ENCODE measurements at regions of chr12 and their contacts with region 1.

Region 1: DNA sequence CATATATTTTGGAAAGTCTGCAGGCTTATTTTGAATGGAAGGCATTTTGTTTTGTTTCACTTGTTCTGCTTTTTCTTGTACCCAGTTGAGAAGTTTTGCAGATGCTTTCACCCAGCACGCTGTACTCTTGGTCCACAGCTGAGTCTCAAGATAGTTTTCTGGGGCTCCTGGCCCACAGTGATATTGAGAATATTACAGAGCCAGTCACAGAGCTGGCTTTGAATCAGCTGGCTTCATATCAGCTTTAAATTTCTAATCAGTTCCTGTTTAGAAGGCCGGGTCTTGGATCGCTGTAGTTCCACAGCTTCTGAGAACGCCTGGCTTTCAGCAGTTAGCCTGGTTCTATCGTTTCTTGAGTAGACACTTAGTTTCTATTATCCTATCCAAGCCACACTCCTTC is 32.5 kb upstream of the PARP11 start:
- DNase-seq: peak in 1 of 14 experiments; percentile 20
- ATAC-seq: peak; percentile 26
- H3K4me3 ChIP-seq: peak overlapping the region; percentile 60
- H3K4me3 Mint-ChIP-seq: peak overlapping the region; percentile 94
- H3K27ac ChIP-seq: peak overlapping the region; percentile 41 to 61
- H3K27ac Mint-ChIP-seq: peak overlapping the region; percentile 89
- H3K4me1 ChIP-seq: peaks cover 16% of the 10 kb centered on the region
- H3K4me1 Mint-ChIP-seq: peaks cover 56% of the 10 kb centered on the region
- H3K27me3 ChIP-seq: no peaks in the 10 kb centered on the region
- H3K27me3 Mint-ChIP-seq: no peaks in the 10 kb centered on the region
- CTCF ChIP-seq: no peak

Region 2: DNA sequence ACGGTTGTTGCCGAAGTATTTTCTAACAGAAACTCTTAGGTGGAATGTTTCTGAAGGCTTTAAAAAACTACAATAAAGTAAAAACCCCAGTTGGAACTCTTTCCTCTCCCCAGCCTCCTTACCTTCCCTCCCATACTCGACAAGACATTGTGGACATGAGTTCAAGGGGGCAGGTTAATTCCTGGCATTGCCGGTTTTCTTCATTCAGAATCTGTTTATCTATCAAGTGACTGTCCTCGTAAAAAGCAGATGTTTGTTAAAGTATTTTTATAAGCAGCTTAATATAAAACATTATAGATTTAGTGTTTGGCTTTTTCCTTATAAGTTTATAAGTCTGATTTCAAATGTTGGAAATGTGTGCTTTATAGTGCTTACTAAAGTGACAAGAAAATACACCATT is 63.1 kb before region 1 on chr12:
- CTCF ChIA-PET with region 1: no interaction called
- POLR2A ChIA-PET with region 1: no interaction called
- intact Hi-C with region 1: no loop called
- DNase-seq: no peak
- ATAC-seq: no peak
- H3K4me3 ChIP-seq: no peak overlapping the region
- H3K4me3 Mint-ChIP-seq: no peak overlapping the region
- H3K27ac ChIP-seq: no peak overlapping the region
- H3K27ac Mint-ChIP-seq: peak overlapping the region; percentile 16
- H3K4me1 ChIP-seq: no peaks in the 10 kb centered on the region
- H3K4me1 Mint-ChIP-seq: peaks cover 61% of the 10 kb centered on the region
- H3K27me3 ChIP-seq: no peaks in the 10 kb centered on the region
- H3K27me3 Mint-ChIP-seq: no peaks in the 10 kb centered on the region
- CTCF ChIP-seq: no peak

Region 3: GRCh38 chr12:3928540-3929184 is 23.0 kb after region 1 on chr12:
- CTCF ChIA-PET with region 1: no interaction called
- POLR2A ChIA-PET with region 1: interaction called, 11 read pairs
- intact Hi-C with region 1: no loop called
- DNase-seq: no peak
- ATAC-seq: no peak
- H3K4me3 ChIP-seq: no peak overlapping the region
- H3K4me3 Mint-ChIP-seq: no peak overlapping the region
- H3K27ac ChIP-seq: no peak overlapping the region
- H3K27ac Mint-ChIP-seq: peak overlapping the region; percentile 17
- H3K4me1 ChIP-seq: peaks cover 53% of the 10 kb centered on the region
- H3K4me1 Mint-ChIP-seq: peaks cover 72% of the 10 kb centered on the region
- H3K27me3 ChIP-seq: no peaks in the 10 kb centered on the region
- H3K27me3 Mint-ChIP-seq: no peaks in the 10 kb centered on the region
- CTCF ChIP-seq: no peak

Measured in CD4-positive, alpha-beta T cell (primary cell).